Panc1 (cell line): ENCODE measurements at regions of chr11 and their contacts with region 1.

Region 1: GRCh38 chr11:127259102-127259501 is 258.5 kb upstream of the KIRREL3 start:
- DNase-seq: no peak
- ATAC-seq: no peak
- H3K4me3 ChIP-seq: no peak overlapping the region
- H3K27ac ChIP-seq: no peak overlapping the region
- H3K4me1 ChIP-seq: no peaks in the 10 kb centered on the region
- H3K27me3 ChIP-seq: no peaks in the 10 kb centered on the region
- CTCF ChIP-seq: peak; percentile 14; the same call in 1 of the 2 replicates

Region 2: GRCh38 chr11:128544471-128545051 is 1285.5 kb after region 1 on chr11:
- CTCF ChIA-PET with region 1: no interaction called
- POLR2A ChIA-PET with region 1: interaction called, 10 read pairs
- in situ Hi-C with region 1: no loop called
- intact Hi-C with region 1: no loop called
- DNase-seq: no peak
- ATAC-seq: no peak
- H3K4me3 ChIP-seq: no peak overlapping the region
- H3K27ac ChIP-seq: no peak overlapping the region
- H3K4me1 ChIP-seq: no peaks in the 10 kb centered on the region
- H3K27me3 ChIP-seq: no peaks in the 10 kb centered on the region
- CTCF ChIP-seq: no peak